ENCODE measurements at regions of chr17 and their contacts with region 1.

Region 1: GRCh38 chr17:6913608-6914443 is 82.0 kb upstream of the ALOX12 start:
- DNase-seq: peak; percentile 76
- ATAC-seq: peak; percentile 81

Region 2: GRCh38 chr17:7021993-7022778 is 108.4 kb after region 1 on chr17:
- intact Hi-C with region 1: loop called (anchors 5 kb)
- DNase-seq: peak; percentile 93
- ATAC-seq: peak; percentile 70